Dendritic cell treated with granulocyte-macrophage colony-stimulating factor and Interleukin-4, amounts not matched to agents 40 ng/mL and 50 ng/mL, for 4 days (primary cell): ENCODE measurements at regions of chr7 and their contacts with region 1.

Region 1: DNA sequence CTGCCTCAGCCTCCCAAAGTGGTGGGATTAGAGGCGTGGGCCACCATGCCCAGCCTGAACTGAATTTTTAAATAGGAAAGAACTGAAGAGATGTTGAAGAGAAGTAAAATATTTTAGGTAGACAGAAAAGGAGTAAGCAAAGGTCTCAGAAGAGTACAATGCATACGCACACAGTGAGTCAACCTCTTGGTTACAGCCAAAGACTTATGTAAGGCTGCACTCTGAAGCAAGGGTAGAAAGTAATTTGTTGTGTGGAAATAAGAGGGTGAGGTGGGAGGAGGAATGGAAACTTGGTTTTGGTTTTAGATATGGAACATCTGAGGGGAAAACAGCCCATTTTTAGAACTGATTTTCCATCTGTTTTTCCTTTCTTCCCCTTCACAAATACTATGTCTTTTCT is 17.6 kb downstream of the KRIT1 start:
- H3K4me3 Mint-ChIP-seq: no peak overlapping the region
- H3K27ac Mint-ChIP-seq: no peak overlapping the region
- H3K4me1 Mint-ChIP-seq: no peaks in the 10 kb centered on the region
- H3K27me3 Mint-ChIP-seq: no peaks in the 10 kb centered on the region

Region 2: DNA sequence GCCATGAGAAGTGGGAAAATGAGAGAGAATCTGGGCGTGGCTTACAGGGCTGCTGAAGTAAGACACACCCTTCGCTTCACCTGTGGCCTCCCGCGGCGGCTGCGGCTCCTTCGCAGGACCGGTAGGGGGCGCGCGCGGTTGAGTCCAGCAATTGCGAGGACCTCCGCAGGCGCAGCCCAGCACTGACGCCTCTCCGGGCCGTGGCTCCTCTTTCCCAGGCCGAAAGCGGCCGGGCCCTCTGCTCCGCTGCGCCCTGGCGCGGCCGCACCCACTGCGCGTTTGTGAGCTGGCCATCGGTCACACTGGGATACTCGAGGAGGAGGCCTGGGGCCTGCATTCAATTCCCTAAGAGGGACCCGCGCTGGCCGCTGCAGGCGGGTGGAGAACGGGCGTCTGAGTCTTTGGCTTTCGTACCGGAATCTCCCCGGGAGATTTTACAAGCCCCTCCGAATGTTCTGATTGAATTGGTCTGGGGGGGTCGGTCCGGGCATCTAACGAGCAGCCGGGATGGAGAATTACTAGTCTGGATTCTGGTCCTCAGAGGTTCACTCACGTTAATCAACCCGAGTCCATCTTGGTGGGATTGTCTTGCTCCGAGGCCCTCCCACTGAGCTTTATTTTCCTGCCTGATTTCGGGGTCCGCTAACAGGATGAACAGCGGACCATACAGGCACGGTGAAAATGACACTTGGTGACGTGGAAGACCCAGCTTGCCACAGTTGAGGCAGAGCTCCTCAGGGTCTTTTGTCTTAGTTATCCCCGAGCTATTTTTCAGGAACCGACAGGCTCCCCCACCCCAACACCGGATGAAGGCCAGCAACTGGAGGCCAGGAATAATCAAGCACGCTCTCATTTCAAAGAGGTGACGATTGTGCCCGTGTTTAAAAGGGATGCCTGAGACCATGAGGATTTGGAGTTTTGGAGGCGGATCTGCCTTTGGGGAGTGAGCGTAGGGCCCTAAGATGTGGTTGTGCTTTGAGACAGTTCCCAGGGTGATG is 48.9 kb before region 1 on chr7 and contains the start of gene LRRD1:
- intact Hi-C with region 1: no loop called
- H3K4me3 Mint-ChIP-seq: peak within 1 kb of the TSS; percentile 83
- H3K27ac Mint-ChIP-seq: peak within 1 kb of the TSS; percentile 75
- H3K4me1 Mint-ChIP-seq: peaks cover 14% of the 10 kb centered on the region
- H3K27me3 Mint-ChIP-seq: peaks cover 19% of the 10 kb centered on the region

Region 3: GRCh38 chr7:92192326-92192725 is 35.8 kb before region 1 on chr7:
- intact Hi-C with region 1: no loop called
- H3K4me3 Mint-ChIP-seq: no peak overlapping the region
- H3K27ac Mint-ChIP-seq: no peak overlapping the region
- H3K4me1 Mint-ChIP-seq: no peaks in the 10 kb centered on the region
- H3K27me3 Mint-ChIP-seq: no peaks in the 10 kb centered on the region

Region 4: DNA sequence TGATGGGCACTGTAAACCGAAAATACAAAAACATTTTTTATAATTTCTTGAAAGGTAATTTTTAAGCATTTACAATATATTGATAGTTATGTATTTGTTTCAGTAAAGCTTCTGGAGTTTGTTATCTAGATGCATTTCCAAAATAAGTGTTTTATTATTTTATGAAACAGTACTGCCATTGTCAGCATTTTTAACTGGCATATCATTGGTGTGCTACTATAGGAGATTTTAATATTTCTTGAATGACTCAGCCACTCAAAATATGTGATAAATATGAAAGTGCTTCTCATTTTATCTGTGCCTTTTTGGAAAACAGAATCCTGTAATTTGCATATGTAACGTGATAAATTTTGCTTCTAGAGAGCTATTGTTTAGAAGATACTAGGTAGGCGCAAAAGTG is 115.6 kb after region 1 on chr7:
- intact Hi-C with region 1: loop called (anchors 10 kb)
- H3K4me3 Mint-ChIP-seq: no peak overlapping the region
- H3K27ac Mint-ChIP-seq: no peak overlapping the region
- H3K4me1 Mint-ChIP-seq: no peaks in the 10 kb centered on the region
- H3K27me3 Mint-ChIP-seq: no peaks in the 10 kb centered on the region